ENCODE measurements at regions of chr14 and their contacts with region 1.

Region 1: DNA sequence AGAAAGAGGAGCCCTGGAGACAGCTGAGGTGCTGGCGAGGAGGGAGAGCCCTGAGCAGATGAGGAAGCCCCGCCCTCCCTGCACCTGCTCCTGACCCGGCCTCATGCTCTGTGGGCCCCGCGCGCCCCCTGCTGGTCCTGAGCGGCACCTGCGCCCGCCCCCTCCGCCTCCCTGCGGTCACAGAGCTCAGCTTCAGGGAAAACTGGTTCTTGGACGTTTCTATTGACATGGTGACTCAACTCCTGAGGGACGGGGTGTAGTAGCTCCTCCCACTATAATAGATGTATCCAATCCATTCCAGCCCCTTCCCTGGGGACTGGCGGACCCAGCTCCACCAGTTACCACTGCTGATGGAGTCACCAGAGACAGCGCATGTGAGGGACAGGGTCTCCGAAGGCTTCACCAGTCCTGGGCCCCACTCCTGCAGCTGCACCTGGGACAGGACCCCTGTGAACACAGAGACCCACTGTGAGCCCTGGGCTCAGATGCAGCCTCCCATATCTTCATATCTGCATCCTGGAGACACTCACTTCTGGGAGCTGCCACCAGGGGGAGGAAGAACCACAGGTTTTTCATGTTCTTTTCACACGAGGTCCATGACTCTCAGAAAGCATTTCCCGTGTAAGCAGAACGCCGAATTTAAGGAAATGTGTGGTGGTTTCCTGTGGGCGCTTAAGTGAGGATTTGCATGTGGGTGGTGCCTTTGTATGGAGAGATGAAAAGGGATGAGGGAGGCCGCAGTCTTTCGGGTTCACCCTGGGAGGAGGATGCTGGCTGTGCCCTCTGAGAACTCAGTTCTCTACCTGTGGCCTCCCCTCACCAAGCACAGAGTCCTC is 1346.4 kb downstream of the TMEM121 start:
- DNase-seq: peak; percentile 91 to 95
- H3K4me3 ChIP-seq: no peak overlapping the region
- H3K4me3 Mint-ChIP-seq: peak overlapping the region; percentile 62
- H3K27ac Mint-ChIP-seq: peak overlapping the region; percentile 48
- H3K4me1 ChIP-seq: peaks cover 36% of the 10 kb centered on the region
- H3K4me1 Mint-ChIP-seq: peaks cover 15% of the 10 kb centered on the region
- H3K27me3 ChIP-seq: no peaks in the 10 kb centered on the region
- H3K27me3 Mint-ChIP-seq: no peaks in the 10 kb centered on the region
- CTCF ChIP-seq: peak; percentile 59 to 90

Region 2: GRCh38 chr14:106792543-106792942 is 80.3 kb before region 1 on chr14:
- CTCF ChIA-PET with region 1: no interaction called
- POLR2A ChIA-PET with region 1: no interaction called
- intact Hi-C with region 1: no loop called
- DNase-seq: no peak
- H3K4me3 ChIP-seq: no peak overlapping the region
- H3K4me3 Mint-ChIP-seq: no peak overlapping the region
- H3K27ac Mint-ChIP-seq: no peak overlapping the region
- H3K4me1 ChIP-seq: no peaks in the 10 kb centered on the region
- H3K4me1 Mint-ChIP-seq: no peaks in the 10 kb centered on the region
- H3K27me3 ChIP-seq: no peaks in the 10 kb centered on the region
- H3K27me3 Mint-ChIP-seq: peaks cover 3% of the 10 kb centered on the region
- CTCF ChIP-seq: no peak

Region 3: DNA sequence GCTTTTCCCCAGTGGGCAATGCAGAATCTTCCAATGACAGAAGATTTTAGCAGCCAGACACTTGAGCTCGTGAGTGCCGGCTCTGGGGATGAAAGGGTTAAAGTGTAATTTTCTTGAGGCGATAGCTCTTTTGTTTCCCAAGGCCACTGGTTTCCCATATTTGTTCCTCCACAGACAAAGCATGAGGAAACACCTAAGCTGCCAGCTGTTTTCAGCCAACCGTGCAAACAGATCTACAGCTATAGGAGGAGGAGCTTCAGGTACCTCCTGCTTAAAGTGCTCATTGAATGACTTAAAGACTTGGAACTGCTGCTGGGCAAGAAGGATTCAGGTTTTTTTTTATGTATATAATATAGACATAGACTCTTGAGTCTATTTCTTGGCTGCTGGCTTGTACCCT is 35.0 kb before region 1 on chr14:
- CTCF ChIA-PET with region 1: interaction called, 10 read pairs
- POLR2A ChIA-PET with region 1: no interaction called
- intact Hi-C with region 1: no loop called
- DNase-seq: no peak
- H3K4me3 ChIP-seq: no peak overlapping the region
- H3K4me3 Mint-ChIP-seq: no peak overlapping the region
- H3K27ac Mint-ChIP-seq: no peak overlapping the region
- H3K4me1 ChIP-seq: peaks cover 14% of the 10 kb centered on the region
- H3K4me1 Mint-ChIP-seq: peaks cover 26% of the 10 kb centered on the region
- H3K27me3 ChIP-seq: no peaks in the 10 kb centered on the region
- H3K27me3 Mint-ChIP-seq: no peaks in the 10 kb centered on the region
- CTCF ChIP-seq: no peak

Measured in Caco-2 (cell line).